SK-N-SH (cell line): ENCODE measurements at regions of chr3 and their contacts with region 1.

Region 1: GRCh38 chr3:64122476-64122875 is 99.2 kb upstream of the PSMD6 start:
- DNase-seq: no peak
- H3K4me3 ChIP-seq: no peak overlapping the region
- H3K27ac ChIP-seq: no peak overlapping the region
- H3K4me1 ChIP-seq: peaks cover 0 to 8% of the 10 kb centered on the region in 2 experiments; a peak in 1 of 4 replicates
- H3K27me3 ChIP-seq: no peaks in the 10 kb centered on the region
- CTCF ChIP-seq: no peak
- EP300 ChIP-seq: no peak
- RAD21 ChIP-seq: no peak

Region 2: DNA sequence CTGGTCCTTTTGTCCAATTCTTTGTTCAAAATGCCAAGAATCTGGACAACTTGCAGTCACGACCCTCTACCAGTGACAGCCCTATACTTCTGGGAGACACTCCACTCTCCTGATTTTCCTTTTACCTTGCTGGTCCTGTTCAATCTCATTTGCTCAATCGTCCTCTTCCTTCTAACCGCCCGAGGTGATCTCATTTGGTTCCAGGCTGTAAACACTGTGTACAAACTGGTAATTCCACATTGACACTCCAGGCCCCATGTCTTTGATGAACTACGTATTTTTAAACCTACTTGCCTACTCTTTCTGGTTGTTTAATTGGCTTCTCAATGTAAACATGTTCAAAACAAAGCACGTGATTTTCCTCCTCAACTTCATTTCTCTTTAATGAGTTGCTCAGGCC is 327.0 kb before region 1 on chr3:
- CTCF ChIA-PET with region 1: no interaction called
- POLR2A ChIA-PET with region 1: no interaction called
- DNase-seq: no peak
- H3K4me3 ChIP-seq: no peak overlapping the region
- H3K27ac ChIP-seq: no peak overlapping the region
- H3K4me1 ChIP-seq: peaks cover 0 to 9% of the 10 kb centered on the region in 2 experiments; a peak in 2 of 4 replicates
- H3K27me3 ChIP-seq: no peaks in the 10 kb centered on the region
- CTCF ChIP-seq: no peak
- EP300 ChIP-seq: no peak
- RAD21 ChIP-seq: no peak

Region 3: DNA sequence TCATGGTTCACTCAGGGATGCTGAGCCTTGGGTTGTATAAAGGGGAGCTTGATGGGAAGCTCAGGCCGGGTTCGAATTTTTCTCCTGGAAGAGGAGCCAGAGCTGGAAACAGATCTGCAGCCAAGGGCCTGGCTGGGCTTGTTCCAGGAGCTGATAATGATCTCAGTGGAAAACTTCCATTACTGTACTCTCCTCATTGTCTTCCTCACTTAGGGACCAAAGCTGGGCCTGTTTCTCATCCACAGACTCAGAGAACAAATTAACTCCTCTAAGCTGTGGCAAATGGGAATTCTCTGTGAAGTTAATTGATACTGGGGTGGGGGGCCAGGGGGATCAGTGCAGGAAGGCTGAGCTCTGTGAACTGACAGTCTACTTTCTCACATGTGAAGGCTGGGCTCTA is 10.8 kb after region 1 on chr3:
- CTCF ChIA-PET with region 1: interaction called, 10 read pairs
- POLR2A ChIA-PET with region 1: no interaction called
- DNase-seq: peak; percentile 48
- H3K4me3 ChIP-seq: no peak overlapping the region
- H3K27ac ChIP-seq: peak overlapping the region in 1 of 2 experiments; percentile 64; a peak in 3 of 4 replicates
- H3K4me1 ChIP-seq: peaks cover 15 to 25% of the 10 kb centered on the region in 2 experiments; a peak in 3 of 4 replicates
- H3K27me3 ChIP-seq: no peaks in the 10 kb centered on the region
- CTCF ChIP-seq: no peak
- EP300 ChIP-seq: peak; percentile 14 to 74; a peak in 2 of 4 replicates
- RAD21 ChIP-seq: peak; percentile 24